Activated B cell treated with CpG ODN at 0.5 μM for 24 hours (primary cell): ENCODE measurements at regions of chrX and their contacts with region 1.

Region 1: DNA sequence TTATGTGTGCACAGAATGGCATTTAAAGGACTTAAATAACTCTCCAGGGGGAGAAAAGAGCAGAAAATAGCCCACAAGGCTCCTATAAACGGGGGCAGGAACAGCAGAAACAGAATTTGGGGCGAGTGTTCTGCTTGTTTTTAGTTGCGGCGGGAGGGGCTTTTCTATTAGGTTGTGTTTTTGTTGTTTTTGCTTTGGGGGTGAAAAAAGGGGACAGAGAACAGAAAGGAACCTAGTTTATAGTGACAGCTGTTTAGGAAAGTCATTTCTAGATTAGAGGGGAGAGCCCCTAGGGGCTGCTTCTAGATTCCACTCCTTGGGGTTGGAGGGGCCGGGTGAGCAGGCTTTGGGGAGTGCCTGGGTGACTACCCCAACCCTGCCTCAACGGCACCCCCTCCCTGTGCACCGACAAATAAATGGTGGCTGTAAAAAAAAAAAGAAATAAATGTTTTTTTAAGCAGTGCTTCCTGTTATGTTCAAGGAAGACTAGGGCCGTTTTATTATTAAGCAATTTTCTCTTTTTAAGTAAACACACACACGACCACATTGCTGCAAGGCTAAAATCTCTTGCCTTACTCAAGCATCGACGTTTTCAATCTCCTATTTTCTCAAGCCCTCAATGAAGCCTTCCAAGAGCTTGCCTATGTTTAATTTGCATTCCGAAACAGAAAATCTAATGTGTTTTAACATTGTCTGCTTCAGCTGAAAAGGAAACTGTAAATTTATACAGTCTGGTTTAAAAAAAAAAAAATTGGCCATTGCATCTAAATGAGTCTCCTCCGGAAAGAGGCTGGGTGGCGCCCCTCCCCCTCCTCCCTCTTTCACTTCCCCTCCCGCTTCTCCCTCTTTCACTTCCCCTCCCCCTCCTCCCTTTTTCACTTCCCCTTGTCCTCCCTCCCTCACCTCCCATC is 123.3 kb upstream of the TBL1X start:
- DNase-seq: peak; percentile 51
- ATAC-seq: peak; percentile 69
- H3K4me3 Mint-ChIP-seq: peak overlapping the region; percentile 73
- H3K27ac Mint-ChIP-seq: peak overlapping the region; percentile 95
- H3K4me1 Mint-ChIP-seq: peaks cover 29% of the 10 kb centered on the region
- H3K27me3 Mint-ChIP-seq: no peaks in the 10 kb centered on the region
- CTCF ChIP-seq: no peak

Region 2: DNA sequence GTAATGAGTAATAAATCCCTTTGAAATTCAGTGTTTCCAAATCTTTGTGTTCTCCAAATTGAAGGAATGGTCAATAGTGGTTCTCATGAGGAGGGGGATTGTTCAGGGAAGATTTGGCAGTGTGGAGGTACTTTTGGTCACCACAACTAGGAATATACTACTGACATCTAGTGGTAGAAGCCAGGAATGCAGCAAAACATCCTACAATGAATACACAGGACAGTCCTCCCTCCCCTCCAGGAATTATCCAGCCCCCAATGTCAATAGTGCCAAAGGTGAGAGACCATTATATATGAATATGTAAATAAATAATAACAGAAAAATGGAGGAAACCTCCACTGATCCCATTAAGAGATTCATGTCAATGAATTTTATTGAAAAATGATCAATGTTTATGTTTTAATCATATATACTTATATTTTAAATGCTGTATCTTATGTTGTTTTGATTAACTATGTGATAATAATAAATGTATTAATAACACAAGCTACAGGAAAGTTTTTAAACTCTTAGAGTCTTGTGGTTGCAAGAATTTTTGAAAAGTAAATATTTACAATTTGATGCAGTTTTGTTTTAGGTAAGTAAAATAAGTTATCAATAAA is 526.0 kb before region 1 on chrX:
- CTCF ChIA-PET with region 1: no interaction called
- POLR2A ChIA-PET with region 1: no interaction called
- intact Hi-C with region 1: loop called (anchors 5 kb)
- DNase-seq: no peak
- ATAC-seq: no peak
- H3K4me3 Mint-ChIP-seq: no peak overlapping the region
- H3K27ac Mint-ChIP-seq: no peak overlapping the region
- H3K4me1 Mint-ChIP-seq: no peaks in the 10 kb centered on the region
- H3K27me3 Mint-ChIP-seq: peaks cover 3% of the 10 kb centered on the region
- CTCF ChIP-seq: no peak

Region 3: GRCh38 chrX:9163214-9163681 is 178.3 kb before region 1 on chrX:
- CTCF ChIA-PET with region 1: no interaction called
- POLR2A ChIA-PET with region 1: interaction called, 14 read pairs
- intact Hi-C with region 1: loop called (anchors 1 kb)
- DNase-seq: no peak
- ATAC-seq: no peak
- H3K4me3 Mint-ChIP-seq: no peak overlapping the region
- H3K27ac Mint-ChIP-seq: no peak overlapping the region
- H3K4me1 Mint-ChIP-seq: peaks cover 28% of the 10 kb centered on the region
- H3K27me3 Mint-ChIP-seq: peaks cover 8% of the 10 kb centered on the region
- CTCF ChIP-seq: no peak

Region 4: DNA sequence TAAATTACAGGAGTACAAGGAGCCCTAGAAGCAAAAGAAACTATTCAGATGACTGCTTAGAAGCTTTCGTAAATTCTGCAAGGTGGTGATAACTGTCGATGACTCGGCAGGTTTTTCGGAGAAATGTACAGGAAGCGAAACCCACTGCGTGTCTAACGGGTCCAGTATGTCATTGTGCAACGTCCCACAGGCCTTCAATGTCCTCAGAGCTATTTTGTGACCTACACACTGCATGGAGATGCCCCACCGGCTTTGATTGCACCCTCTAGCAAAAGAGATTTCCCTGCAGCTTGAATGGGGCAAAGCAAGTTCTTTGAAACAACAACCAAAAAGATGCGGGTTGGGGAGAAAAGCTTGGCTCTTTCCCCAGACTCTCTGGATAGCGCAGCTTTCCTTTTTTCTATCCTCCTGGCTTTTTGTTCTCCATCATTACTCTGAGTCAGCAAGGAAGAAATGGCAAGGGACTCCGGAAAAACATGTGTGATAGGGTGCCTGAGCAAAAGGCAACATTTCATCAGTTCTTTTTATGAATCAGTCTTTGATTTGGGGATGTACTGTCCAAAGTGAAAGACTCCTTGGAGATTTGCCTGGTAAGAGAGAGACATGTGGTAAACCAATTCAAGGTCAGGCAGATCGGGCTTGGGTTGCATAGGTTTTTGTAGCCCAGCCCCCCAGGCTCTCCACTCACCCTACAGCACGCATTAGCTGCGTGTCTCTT is 11.3 kb after region 1 on chrX:
- CTCF ChIA-PET with region 1: no interaction called
- POLR2A ChIA-PET with region 1: interaction called, 22 read pairs
- intact Hi-C with region 1: loop called (anchors 1 kb)
- DNase-seq: no peak
- ATAC-seq: peak; percentile 71
- H3K4me3 Mint-ChIP-seq: peak overlapping the region; percentile 70
- H3K27ac Mint-ChIP-seq: peak overlapping the region; percentile 80
- H3K4me1 Mint-ChIP-seq: peaks cover 27% of the 10 kb centered on the region
- H3K27me3 Mint-ChIP-seq: no peaks in the 10 kb centered on the region
- CTCF ChIP-seq: no peak

Region 5: DNA sequence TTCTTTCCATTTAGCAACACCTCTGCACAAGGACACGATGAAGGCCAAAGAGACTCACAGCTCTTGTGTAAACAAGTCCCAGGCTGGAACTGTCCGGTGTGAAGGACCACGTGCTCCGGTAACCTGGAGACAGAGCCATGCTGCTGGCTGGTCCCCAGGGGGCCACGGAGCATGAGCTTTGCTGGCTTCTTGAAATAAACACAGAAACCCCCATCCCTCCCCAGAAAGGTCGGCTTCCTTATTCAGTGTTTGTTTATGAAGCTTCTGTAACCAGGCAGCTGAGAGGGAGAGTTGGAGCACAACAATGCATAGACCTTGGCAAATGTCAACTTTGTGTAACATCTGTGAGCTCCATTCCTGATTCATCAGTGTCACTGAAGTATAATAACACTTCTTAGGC is 314.7 kb after region 1 on chrX:
- CTCF ChIA-PET with region 1: no interaction called
- POLR2A ChIA-PET with region 1: no interaction called
- intact Hi-C with region 1: loop called (anchors 5 kb)
- DNase-seq: no peak
- ATAC-seq: peak; percentile 86
- H3K4me3 Mint-ChIP-seq: no peak overlapping the region
- H3K27ac Mint-ChIP-seq: peak overlapping the region; percentile 76
- H3K4me1 Mint-ChIP-seq: peaks cover 21% of the 10 kb centered on the region
- H3K27me3 Mint-ChIP-seq: no peaks in the 10 kb centered on the region
- CTCF ChIP-seq: no peak

Region 6: DNA sequence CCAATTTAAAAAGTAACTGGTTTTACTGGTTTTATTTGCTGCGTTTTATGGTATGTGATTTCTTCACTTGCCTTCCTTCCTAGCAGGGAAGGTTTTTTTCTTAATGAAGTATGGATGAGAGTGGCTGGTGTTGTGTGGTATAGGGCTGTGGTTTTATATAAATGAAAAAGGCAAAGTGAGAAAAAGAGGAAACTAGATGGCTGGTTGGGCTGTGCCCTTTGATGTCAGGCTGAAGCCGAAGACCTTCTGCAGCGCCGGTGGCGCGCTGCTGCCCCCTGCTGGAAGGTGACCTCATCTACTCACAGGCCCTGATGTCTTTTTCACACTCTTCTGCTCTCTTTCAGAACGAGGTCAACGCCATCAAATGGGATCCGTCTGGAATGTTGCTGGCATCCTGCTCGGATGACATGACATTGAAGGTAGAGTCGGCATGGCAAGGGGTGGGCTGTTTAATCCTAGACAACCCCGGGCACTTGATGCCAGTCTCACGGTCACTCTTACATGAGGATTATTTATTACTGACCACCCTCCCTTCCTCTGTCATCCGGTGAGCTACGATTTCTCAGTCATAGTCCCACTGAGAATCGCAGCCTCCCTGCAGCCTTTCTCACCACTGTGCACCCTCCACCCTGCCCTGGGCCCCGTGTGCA is 367.5 kb after region 1 on chrX:
- CTCF ChIA-PET with region 1: no interaction called
- POLR2A ChIA-PET with region 1: interaction called, 9 read pairs
- intact Hi-C with region 1: loop called (anchors 2 kb)
- DNase-seq: peak; percentile 67
- ATAC-seq: peak; percentile 85
- H3K4me3 Mint-ChIP-seq: no peak overlapping the region
- H3K27ac Mint-ChIP-seq: no peak overlapping the region
- H3K4me1 Mint-ChIP-seq: peaks cover 12% of the 10 kb centered on the region
- H3K27me3 Mint-ChIP-seq: no peaks in the 10 kb centered on the region
- CTCF ChIP-seq: no peak